Activated CD4-positive, alpha-beta T cell treated with anti-CD3 and anti-CD28 coated beads for 36 hours (primary cell): ENCODE measurements at regions of chr17 and their contacts with region 1.

Region 1: DNA sequence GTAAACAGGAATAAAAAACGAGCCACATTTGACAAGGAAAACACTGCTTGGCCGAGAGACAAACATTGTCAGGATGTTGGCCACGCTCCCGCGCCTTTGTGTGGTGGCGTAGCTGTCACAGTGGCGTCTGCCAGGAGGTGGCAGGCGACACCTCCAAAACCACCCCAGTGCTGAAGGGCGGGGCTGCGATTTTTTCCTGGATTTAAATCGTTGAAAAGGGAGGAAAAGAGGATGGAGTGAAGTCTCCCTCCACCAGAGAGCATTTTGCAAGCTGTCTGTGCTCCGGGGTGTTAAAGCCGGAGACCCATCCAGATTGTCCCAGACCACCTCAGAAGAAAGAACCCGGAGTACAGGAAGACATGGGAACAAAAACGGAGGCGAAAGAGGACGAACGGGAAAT is 12.7 kb downstream of the MRM3 start:
- DNase-seq: peak; percentile 73
- ATAC-seq: peak; percentile 80
- H3K4me3 Mint-ChIP-seq: no peak overlapping the region
- H3K27ac Mint-ChIP-seq: no peak overlapping the region
- H3K4me1 Mint-ChIP-seq: peaks cover 6% of the 10 kb centered on the region
- H3K27me3 Mint-ChIP-seq: no peaks in the 10 kb centered on the region

Region 2: DNA sequence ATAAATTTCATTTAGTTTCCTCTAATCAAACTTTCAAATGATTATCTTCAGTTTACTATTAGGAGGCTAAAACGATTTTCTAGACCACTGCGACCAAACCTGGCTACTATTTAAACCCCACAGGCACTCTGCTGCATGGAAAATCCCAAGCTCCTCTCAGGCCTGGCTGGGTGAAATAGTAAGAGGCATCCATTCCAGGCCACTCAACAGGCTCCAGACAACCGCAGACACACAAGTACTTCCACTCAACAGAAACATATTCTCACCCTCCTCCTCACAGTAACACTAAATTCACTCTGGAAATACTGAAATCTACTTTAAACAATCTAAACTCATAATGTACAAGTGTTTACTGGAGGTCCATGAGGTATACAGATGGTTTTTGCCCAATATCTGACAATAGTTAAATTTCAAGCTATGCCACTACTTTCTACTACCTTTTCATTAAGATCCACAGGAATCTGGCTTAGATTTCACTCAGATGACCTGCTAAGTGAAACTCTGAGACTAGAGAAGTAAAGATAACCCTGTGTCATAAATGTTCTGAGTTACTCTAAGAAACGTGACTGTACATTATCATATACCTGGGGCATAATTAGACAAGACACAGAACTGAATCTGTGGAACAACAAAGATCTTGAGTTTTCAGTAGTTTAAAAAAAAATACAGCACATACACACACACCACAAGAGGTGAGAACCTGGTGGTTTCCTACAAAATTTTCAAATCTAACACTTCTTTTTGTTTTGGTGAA is 90.6 kb before region 1 on chr17:
- CTCF ChIA-PET with region 1: no interaction called
- POLR2A ChIA-PET with region 1: no interaction called
- intact Hi-C with region 1: no loop called
- DNase-seq: no peak
- ATAC-seq: no peak
- H3K4me3 Mint-ChIP-seq: no peak overlapping the region
- H3K27ac Mint-ChIP-seq: no peak overlapping the region
- H3K4me1 Mint-ChIP-seq: peaks cover 5% of the 10 kb centered on the region
- H3K27me3 Mint-ChIP-seq: no peaks in the 10 kb centered on the region

Region 3: GRCh38 chr17:760371-760770 is 34.5 kb before region 1 on chr17:
- CTCF ChIA-PET with region 1: interaction called, 3 read pairs
- POLR2A ChIA-PET with region 1: no interaction called
- intact Hi-C with region 1: loop called in 1 of 2 experiments (anchors 1 kb)
- DNase-seq: no peak
- ATAC-seq: no peak
- H3K4me3 Mint-ChIP-seq: no peak overlapping the region
- H3K27ac Mint-ChIP-seq: no peak overlapping the region
- H3K4me1 Mint-ChIP-seq: no peaks in the 10 kb centered on the region
- H3K27me3 Mint-ChIP-seq: no peaks in the 10 kb centered on the region